Caco-2 (cell line): ENCODE measurements at regions of chr18 and their contacts with region 1.

Region 1: GRCh38 chr18:39681061-39681460 is 2115.5 kb upstream of the CELF4 start:
- DNase-seq: no peak
- H3K4me3 ChIP-seq: no peak overlapping the region
- H3K4me3 Mint-ChIP-seq: no peak overlapping the region
- H3K27ac Mint-ChIP-seq: no peak overlapping the region
- H3K4me1 ChIP-seq: no peaks in the 10 kb centered on the region
- H3K4me1 Mint-ChIP-seq: no peaks in the 10 kb centered on the region
- H3K27me3 ChIP-seq: no peaks in the 10 kb centered on the region
- H3K27me3 Mint-ChIP-seq: no peaks in the 10 kb centered on the region
- CTCF ChIP-seq: no peak

Region 2: DNA sequence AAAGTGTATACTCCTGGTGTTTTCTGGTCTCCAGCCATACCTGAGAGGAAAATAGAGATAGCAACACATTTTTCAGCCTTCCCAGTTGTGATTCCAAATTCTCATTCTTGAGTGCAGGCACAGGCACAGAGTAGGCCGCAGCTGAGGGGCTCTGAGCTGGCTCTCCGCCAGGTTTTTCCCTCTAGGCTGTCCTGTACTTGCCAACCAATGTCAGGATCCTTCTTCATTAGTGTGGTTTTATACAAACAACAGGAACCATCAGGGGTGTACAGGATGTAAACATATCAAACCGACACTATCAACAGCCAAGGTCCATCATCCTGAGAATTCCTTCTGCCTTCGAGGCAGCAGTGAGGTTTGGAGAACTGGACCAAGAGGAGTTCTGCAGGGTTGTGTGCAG is 381.9 kb before region 1 on chr18:
- CTCF ChIA-PET with region 1: no interaction called
- POLR2A ChIA-PET with region 1: no interaction called
- intact Hi-C with region 1: no loop called
- DNase-seq: no peak
- H3K4me3 ChIP-seq: no peak overlapping the region
- H3K4me3 Mint-ChIP-seq: no peak overlapping the region
- H3K27ac Mint-ChIP-seq: no peak overlapping the region
- H3K4me1 ChIP-seq: no peaks in the 10 kb centered on the region
- H3K4me1 Mint-ChIP-seq: no peaks in the 10 kb centered on the region
- H3K27me3 ChIP-seq: no peaks in the 10 kb centered on the region
- H3K27me3 Mint-ChIP-seq: no peaks in the 10 kb centered on the region
- CTCF ChIP-seq: no peak

Region 3: GRCh38 chr18:40159141-40160017 is 478.3 kb after region 1 on chr18:
- CTCF ChIA-PET with region 1: no interaction called
- POLR2A ChIA-PET with region 1: no interaction called
- intact Hi-C with region 1: loop called (anchors 5 kb)
- DNase-seq: peak in 1 of 2 experiments; percentile 3
- H3K4me3 ChIP-seq: no peak overlapping the region
- H3K4me3 Mint-ChIP-seq: no peak overlapping the region
- H3K27ac Mint-ChIP-seq: no peak overlapping the region
- H3K4me1 ChIP-seq: no peaks in the 10 kb centered on the region
- H3K4me1 Mint-ChIP-seq: no peaks in the 10 kb centered on the region
- H3K27me3 ChIP-seq: no peaks in the 10 kb centered on the region
- H3K27me3 Mint-ChIP-seq: no peaks in the 10 kb centered on the region
- CTCF ChIP-seq: peak; percentile 14 to 46